SK-N-SH (cell line): ENCODE measurements at regions of chr9 and their contacts with region 1.

Region 1: GRCh38 chr9:38346811-38347210 is 45.7 kb upstream of the ALDH1B1 start:
- DNase-seq: no peak
- H3K4me3 ChIP-seq: no peak overlapping the region
- H3K27ac ChIP-seq: no peak overlapping the region
- H3K4me1 ChIP-seq: peaks cover 0 to 20% of the 10 kb centered on the region in 2 experiments; a peak in 1 of 4 replicates
- H3K27me3 ChIP-seq: no peaks in the 10 kb centered on the region; the same call in 1 of the 2 replicates
- CTCF ChIP-seq: no peak
- EP300 ChIP-seq: no peak
- RAD21 ChIP-seq: no peak

Region 2: GRCh38 chr9:38322937-38323336 is 23.9 kb before region 1 on chr9:
- CTCF ChIA-PET with region 1: no interaction called
- POLR2A ChIA-PET with region 1: no interaction called
- DNase-seq: no peak
- H3K4me3 ChIP-seq: no peak overlapping the region
- H3K27ac ChIP-seq: no peak overlapping the region
- H3K4me1 ChIP-seq: peaks cover 0 to 21% of the 10 kb centered on the region in 2 experiments; a peak in 2 of 4 replicates
- H3K27me3 ChIP-seq: peaks cover 4% of the 10 kb centered on the region
- CTCF ChIP-seq: no peak
- EP300 ChIP-seq: no peak
- RAD21 ChIP-seq: no peak

Region 3: DNA sequence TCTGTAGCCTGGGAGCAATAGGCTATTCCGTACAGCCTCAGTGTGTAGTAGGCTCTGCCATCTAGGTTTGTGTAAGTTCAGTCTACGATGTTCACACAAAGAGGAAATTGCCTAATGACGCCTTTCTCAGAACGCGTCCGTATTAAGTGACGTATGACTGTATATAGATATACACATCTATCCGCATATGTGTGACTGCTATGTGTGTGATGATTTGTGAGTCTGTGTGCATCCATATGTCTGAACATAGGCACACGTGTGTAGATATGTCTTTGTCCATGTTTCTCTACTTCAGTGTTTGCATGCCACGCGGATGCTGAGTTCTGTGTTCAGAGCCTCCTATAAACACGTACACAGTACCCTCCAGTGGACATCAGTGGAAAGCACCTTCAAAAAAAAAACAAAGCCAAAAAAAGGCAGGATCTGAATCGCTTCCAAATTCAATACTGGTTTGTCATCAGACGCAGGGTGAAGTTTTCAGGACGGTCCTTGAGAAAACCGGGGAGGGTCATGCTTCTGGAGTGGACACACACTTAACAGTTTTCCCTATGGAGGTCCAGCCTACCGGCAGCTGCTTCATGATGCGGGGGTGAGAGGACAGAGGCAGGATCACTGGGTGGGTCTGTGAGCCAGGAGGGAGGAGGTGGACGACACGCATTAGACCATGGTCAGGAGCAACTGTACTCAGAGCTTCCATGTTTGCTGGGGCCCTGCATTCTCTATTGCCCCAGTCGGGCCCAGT is 16.2 kb after region 1 on chr9:
- CTCF ChIA-PET with region 1: interaction called, 15 read pairs
- POLR2A ChIA-PET with region 1: no interaction called
- DNase-seq: peak; percentile 70
- H3K4me3 ChIP-seq: no peak overlapping the region; a peak in 1 of 4 replicates
- H3K27ac ChIP-seq: peak overlapping the region in 1 of 2 experiments; percentile 17; a peak in 1 of 4 replicates
- H3K4me1 ChIP-seq: peaks cover 0 to 27% of the 10 kb centered on the region in 2 experiments; a peak in 2 of 4 replicates
- H3K27me3 ChIP-seq: no peaks in the 10 kb centered on the region
- CTCF ChIP-seq: peak; percentile 76
- EP300 ChIP-seq: no peak
- RAD21 ChIP-seq: peak; percentile 98